H1 (cell line): ENCODE measurements at regions of chr4 and their contacts with region 1.

Region 1: DNA sequence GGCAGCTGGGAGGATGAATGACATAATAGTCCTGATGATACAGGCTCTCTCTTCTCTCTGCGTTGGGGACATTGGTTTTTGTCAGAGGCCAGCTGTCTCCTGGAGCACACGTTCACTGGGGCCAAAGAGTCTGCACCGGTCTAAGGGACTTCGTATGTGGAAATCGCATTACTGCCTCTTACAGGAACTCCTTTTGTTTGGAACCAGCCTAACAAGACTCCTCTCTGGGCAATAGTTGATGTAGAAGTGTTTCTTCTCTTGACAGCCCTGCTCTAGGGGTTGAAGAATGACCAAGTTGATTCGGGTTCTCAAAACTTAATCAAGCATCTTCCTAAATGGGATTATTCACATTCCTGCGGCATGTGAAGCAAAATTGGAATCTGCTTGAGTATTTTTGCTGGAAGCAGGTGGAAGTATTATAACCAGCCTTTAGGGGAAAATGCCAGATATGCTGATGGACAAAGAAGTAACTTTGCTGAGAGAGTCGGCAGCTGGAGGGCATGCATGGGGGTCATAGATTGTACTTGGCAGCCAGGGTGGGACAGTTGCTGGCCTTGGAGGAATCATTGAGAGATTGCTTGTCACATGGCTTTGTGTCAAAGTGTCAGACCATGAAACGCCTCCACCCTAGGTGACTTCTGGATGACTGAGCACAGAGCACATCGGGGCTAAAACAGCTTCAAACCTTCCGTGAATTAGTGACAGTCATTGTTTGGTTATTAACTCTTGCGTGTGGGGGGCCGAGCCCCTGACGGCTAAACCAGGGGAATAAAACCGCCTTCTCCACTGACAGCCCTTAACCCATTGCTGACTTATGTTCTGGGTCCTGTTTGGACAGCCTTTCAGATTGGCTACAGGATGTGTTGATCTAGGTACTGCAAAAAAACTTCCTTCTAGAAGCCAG is 34.4 kb upstream of the SLC34A2 start:
- DNase-seq: no peak
- H3K4me3 ChIP-seq: no peak overlapping the region
- H3K27ac ChIP-seq: no peak overlapping the region
- H3K4me1 ChIP-seq: peaks cover 0 to 2% (median 0%) of the 10 kb centered on the region in 4 experiments; a peak in 1 of 7 replicates
- H3K27me3 ChIP-seq: no peaks in the 10 kb centered on the region
- CTCF ChIP-seq: no peak
- EP300 ChIP-seq: no peak
- POLR2A ChIP-seq: no peak
- RAD21 ChIP-seq: no peak

Region 2: GRCh38 chr4:25590171-25590570 is 31.1 kb before region 1 on chr4:
- CTCF ChIA-PET with region 1: no interaction called
- POLR2A ChIA-PET with region 1: no interaction called
- DNase-seq: no peak
- H3K4me3 ChIP-seq: no peak overlapping the region
- H3K27ac ChIP-seq: no peak overlapping the region
- H3K4me1 ChIP-seq: peaks cover 0 to 15% (median 7%) of the 10 kb centered on the region in 4 experiments; a peak in 4 of 7 replicates
- H3K27me3 ChIP-seq: no peaks in the 10 kb centered on the region
- CTCF ChIP-seq: no peak
- EP300 ChIP-seq: no peak
- POLR2A ChIP-seq: no peak
- RAD21 ChIP-seq: no peak

Region 3: DNA sequence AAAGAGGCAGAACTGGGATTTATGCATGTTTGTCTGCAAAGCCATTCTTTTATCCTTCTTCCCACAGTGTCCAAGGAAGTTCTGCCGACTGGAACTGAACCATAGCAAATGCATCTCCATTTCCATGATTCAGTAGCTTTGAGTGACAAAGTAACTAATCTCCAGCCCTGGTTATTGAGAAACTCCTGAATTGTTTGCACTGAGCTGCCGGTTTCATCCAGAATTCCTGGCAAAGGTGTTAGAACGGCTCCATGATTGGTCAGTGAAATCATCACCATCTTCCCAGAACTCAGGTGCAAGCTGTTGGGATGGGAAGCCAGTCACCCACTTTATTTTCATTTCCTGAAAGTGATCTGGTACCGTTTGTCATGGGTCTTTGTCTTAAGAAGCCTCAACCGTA is 12.6 kb before region 1 on chr4:
- CTCF ChIA-PET with region 1: interaction called, 13 read pairs
- POLR2A ChIA-PET with region 1: no interaction called
- DNase-seq: no peak
- H3K4me3 ChIP-seq: no peak overlapping the region
- H3K27ac ChIP-seq: no peak overlapping the region
- H3K4me1 ChIP-seq: no peaks in the 10 kb centered on the region
- H3K27me3 ChIP-seq: no peaks in the 10 kb centered on the region
- CTCF ChIP-seq: no peak
- EP300 ChIP-seq: no peak
- POLR2A ChIP-seq: no peak
- RAD21 ChIP-seq: no peak

Region 4: GRCh38 chr4:25637581-25638220 is 16.4 kb after region 1 on chr4:
- CTCF ChIA-PET with region 1: no interaction called
- POLR2A ChIA-PET with region 1: no interaction called
- DNase-seq: no peak
- H3K4me3 ChIP-seq: no peak overlapping the region
- H3K27ac ChIP-seq: no peak overlapping the region
- H3K4me1 ChIP-seq: no peaks in the 10 kb centered on the region; a peak in 1 of 7 replicates
- H3K27me3 ChIP-seq: no peaks in the 10 kb centered on the region; a peak in 1 of 7 replicates
- CTCF ChIP-seq: no peak
- EP300 ChIP-seq: no peak
- POLR2A ChIP-seq: no peak
- RAD21 ChIP-seq: no peak